ENCODE measurements at regions of chr19 and their contacts with region 1.

Region 1: GRCh38 chr19:3163230-3163886 is 15.2 kb upstream of the S1PR4 start:
- DNase-seq: peak; percentile 56
- H3K4me3 ChIP-seq: no peak overlapping the region
- H3K27ac ChIP-seq: no peak overlapping the region
- H3K4me1 ChIP-seq: peaks cover 0 to 6% (median 0%) of the 10 kb centered on the region in 4 donors
- H3K27me3 ChIP-seq: no peaks in the 10 kb centered on the region
- CTCF ChIP-seq: peak; percentile 82 to 96 (median 94)
- EP300 ChIP-seq: no peak
- POLR2A ChIP-seq: no peak

Region 2: GRCh38 chr19:2962045-2962561 is 201.3 kb before region 1 on chr19:
- in situ Hi-C with region 1: loop called in 2 of 4 experiments (anchors 5 to 10 kb)
- intact Hi-C with region 1: loop called (anchors 5 kb)
- DNase-seq: peak; percentile 47
- H3K4me3 ChIP-seq: no peak overlapping the region
- H3K27ac ChIP-seq: no peak overlapping the region
- H3K4me1 ChIP-seq: peaks cover 0 to 5% (median 1%) of the 10 kb centered on the region in 4 donors
- H3K27me3 ChIP-seq: no peaks in the 10 kb centered on the region
- CTCF ChIP-seq: peak; percentile 70 to 96 (median 73)
- EP300 ChIP-seq: no peak
- POLR2A ChIP-seq: no peak

Region 3: DNA sequence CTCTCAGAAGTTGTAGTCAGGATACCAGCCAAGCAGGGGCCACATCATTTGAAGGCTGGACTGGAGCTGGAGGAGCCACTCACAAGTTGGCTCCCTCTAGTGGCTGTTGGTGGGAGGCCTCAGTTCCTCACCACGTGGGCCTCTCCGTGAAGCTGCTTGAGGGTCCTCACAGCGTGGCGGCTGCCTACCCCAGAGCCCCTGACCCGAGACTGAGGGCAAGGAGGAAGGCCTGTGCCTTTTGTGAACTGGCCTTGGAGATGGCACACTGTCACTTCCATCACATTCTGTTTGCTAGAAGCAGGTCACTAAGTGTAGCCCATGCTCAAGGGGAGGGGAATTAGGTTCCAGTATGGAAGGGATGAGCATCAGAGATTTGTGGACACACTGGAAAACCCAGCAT is 54.6 kb before region 1 on chr19:
- in situ Hi-C with region 1: no loop called
- intact Hi-C with region 1: no loop called
- DNase-seq: peak; percentile 72
- H3K4me3 ChIP-seq: no peak overlapping the region
- H3K27ac ChIP-seq: peak overlapping the region in 1 of 4 donors; percentile 69
- H3K4me1 ChIP-seq: peaks cover 20 to 48% (median 37%) of the 10 kb centered on the region in 4 donors
- H3K27me3 ChIP-seq: no peaks in the 10 kb centered on the region
- CTCF ChIP-seq: peak; percentile 80 to 88 (median 82)
- EP300 ChIP-seq: no peak
- POLR2A ChIP-seq: no peak

Region 4: DNA sequence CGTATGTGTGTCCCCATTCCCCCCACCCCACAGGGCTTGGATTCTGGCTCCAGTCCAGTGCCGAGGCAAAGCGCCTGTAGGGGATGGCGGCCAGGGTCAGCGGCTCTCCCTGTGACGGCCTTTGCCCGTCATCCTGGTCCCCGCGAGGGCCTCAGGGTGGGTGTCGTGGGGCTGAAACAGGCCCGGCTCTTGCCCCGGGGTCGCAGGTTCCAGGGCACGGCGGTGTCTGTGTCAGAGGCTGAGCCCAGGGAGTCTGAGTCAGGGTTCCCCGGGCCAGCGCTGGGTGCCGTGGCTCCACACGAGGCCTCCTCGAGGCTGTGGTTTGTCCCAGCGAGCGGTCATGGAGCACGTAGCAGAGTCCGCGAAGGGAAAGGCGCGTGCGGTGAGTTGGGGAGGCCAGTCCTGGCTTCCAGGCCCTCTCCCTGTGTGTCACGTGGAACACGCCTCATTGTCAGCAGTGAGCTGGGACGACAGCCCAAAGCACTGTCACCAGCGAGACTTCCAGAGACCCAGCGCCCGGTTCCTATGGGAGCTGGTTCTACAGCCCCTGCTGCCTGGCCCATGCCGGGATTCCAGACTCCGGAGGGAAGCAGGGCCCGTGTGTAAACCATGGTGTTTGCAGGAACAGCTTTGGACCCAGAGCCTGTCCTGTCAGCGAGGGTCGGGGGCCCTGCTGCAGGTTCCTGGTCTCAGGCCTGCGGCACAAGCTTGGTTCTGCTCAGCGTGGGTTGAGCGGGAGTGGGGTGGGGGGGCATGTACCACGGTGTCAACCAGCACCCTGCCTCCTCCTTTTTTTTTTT is 35.7 kb after region 1 on chr19:
- in situ Hi-C with region 1: no loop called
- intact Hi-C with region 1: no loop called
- DNase-seq: no peak
- H3K4me3 ChIP-seq: no peak overlapping the region
- H3K27ac ChIP-seq: no peak overlapping the region
- H3K4me1 ChIP-seq: no peaks in the 10 kb centered on the region
- H3K27me3 ChIP-seq: no peaks in the 10 kb centered on the region
- CTCF ChIP-seq: no peak
- EP300 ChIP-seq: no peak
- POLR2A ChIP-seq: no peak

Region 5: DNA sequence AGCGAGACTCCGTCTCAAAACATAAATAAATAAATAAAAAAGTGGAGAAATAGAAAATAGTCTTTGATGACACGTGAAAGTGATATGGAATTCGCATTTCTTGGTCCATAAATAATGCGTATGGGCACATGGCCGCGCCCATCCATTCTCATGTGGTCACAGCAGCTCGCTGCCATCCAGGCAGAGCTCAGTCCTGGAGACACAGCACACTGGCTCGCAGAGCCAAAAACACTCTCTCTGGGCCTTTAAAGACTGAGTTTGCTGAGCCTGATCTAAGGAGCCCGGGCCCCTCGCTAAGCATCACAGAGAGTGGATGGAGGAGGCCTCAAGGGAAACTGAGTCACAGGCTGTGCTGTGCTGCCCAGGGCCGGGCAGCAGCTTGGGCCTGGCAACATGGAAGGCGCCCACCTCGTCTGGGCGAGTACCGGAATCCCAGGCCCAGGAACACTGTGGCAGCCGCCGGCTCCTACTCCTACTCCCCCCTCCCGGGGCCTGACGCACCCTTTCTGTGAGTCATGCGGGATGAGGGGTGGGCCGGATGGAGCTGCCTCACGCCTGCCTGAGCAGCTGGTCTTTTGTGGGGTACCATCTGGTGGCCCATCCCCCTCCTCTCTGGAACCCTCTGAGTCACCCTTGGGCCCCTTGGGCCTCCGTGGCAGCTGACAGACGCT is 492.2 kb after region 1 on chr19:
- in situ Hi-C with region 1: no loop called
- intact Hi-C with region 1: no loop called
- DNase-seq: peak; percentile 37
- H3K4me3 ChIP-seq: no peak overlapping the region
- H3K27ac ChIP-seq: peak overlapping the region in 2 of 4 donors; percentile 16 to 40
- H3K4me1 ChIP-seq: no peaks in the 10 kb centered on the region
- H3K27me3 ChIP-seq: no peaks in the 10 kb centered on the region
- CTCF ChIP-seq: no peak
- EP300 ChIP-seq: no peak
- POLR2A ChIP-seq: no peak